Endothelial cell of umbilical vein (primary cell): ENCODE measurements at regions of chr19 and their contacts with region 1.

Region 1: DNA sequence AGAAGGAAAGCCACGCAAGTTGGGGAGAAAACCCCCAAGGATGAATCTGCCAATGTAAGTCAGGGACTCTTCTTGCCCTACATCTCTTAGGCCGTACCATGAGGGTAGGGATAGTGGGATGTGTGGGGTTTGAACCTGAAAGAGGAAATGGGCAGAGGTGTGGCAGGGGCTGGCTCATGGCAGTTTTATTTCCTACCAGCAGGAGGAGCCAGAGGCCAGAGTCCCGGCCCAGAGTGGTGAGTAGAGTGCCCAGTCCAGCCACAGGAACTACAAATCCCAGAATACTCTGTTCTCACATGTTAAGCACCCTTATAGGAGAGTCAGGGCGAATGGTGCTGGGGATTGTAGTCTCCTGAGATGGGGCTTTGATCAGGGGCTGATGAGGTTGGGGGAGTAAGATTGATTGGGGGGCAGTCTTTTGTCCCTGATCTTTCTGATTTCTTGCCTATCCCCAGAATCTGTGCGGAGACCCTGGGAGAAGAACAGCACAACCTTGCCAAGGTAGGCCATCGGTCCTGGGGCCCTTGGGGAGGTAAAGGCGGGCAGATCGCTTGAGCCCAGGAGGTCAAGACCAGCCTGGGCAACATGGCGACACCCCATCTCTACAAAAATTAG is 16.5 kb downstream of the VASP start:
- DNase-seq: peak; percentile 86
- H3K4me3 ChIP-seq: no peak overlapping the region
- H3K27ac ChIP-seq: no peak overlapping the region
- H3K4me1 ChIP-seq: no peaks in the 10 kb centered on the region
- H3K27me3 ChIP-seq: no peaks in the 10 kb centered on the region
- CTCF ChIP-seq: peak; percentile 82 to 92
- POLR2A ChIP-seq: peak; percentile 46

Region 2: GRCh38 chr19:45455707-45456499 is 67.8 kb before region 1 on chr19:
- CTCF ChIA-PET with region 1: no interaction called
- POLR2A ChIA-PET with region 1: no interaction called
- dilution Hi-C with region 1: no loop called
- intact Hi-C with region 1: no loop called
- DNase-seq: peak; percentile 98
- H3K4me3 ChIP-seq: no peak overlapping the region
- H3K27ac ChIP-seq: peak overlapping the region; percentile 90
- H3K4me1 ChIP-seq: peaks cover 19% of the 10 kb centered on the region
- H3K27me3 ChIP-seq: no peaks in the 10 kb centered on the region
- CTCF ChIP-seq: no peak
- POLR2A ChIP-seq: no peak

Region 3: GRCh38 chr19:45506246-45506990 is 17.3 kb before region 1 on chr19:
- CTCF ChIA-PET with region 1: interaction called, 3 read pairs
- POLR2A ChIA-PET with region 1: no interaction called
- dilution Hi-C with region 1: no loop called
- intact Hi-C with region 1: loop called (anchors 2 kb)
- DNase-seq: peak; percentile 88
- H3K4me3 ChIP-seq: peak overlapping the region; percentile 92 to 100 (median 96)
- H3K27ac ChIP-seq: peak overlapping the region; percentile 69
- H3K4me1 ChIP-seq: peaks cover 23% of the 10 kb centered on the region
- H3K27me3 ChIP-seq: no peaks in the 10 kb centered on the region
- CTCF ChIP-seq: peak; percentile 36 to 64
- POLR2A ChIP-seq: peak; percentile 71

Region 4: GRCh38 chr19:45569619-45570421 is 46.1 kb after region 1 on chr19:
- CTCF ChIA-PET with region 1: no interaction called
- POLR2A ChIA-PET with region 1: no interaction called
- dilution Hi-C with region 1: no loop called
- intact Hi-C with region 1: loop called (anchors 1 kb)
- DNase-seq: peak; percentile 41
- H3K4me3 ChIP-seq: no peak overlapping the region
- H3K27ac ChIP-seq: peak overlapping the region; percentile 19
- H3K4me1 ChIP-seq: peaks cover 10% of the 10 kb centered on the region
- H3K27me3 ChIP-seq: no peaks in the 10 kb centered on the region
- CTCF ChIP-seq: peak; percentile 65 to 78
- POLR2A ChIP-seq: no peak